ENCODE measurements at regions of chr1 and their contacts with region 1.

Region 1: DNA sequence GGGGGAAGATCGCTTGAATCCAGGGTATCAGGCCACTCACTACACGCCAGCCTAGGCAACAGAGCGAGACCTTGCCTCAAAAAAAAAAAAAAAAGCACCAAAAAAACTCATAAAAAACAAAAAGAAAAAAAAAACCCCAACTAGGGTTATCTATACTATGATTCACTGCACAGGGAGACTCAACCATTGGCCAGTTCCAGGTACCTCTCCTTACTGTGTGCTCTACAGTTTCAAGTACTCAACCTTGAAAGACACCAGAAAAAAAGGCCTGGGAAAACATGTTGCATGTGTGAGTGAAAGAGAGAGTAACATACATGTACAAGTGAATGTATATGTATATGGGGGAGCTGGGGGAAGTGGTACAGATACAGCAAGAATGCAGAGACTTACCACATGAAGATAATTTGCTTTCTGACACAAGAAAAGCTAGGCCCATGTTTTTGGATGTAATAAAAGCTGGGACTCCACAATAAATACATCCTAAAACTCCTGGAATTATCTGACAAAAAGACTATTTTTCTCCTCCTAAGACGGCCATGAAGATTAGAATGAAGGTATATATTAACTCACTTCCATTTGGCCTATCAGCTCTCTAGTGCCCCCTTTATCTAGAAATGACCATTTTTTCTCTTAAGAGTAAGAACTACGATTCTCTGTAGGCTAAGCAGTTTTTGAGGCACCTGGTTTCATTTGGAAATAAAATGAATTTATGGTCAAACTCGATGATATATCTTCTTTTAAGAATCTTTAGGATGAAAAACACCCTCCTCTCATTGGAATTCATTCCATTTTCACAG is 52.2 kb downstream of the SLC27A3 start:
- DNase-seq: no peak
- ATAC-seq: peak; percentile 64
- H3K4me3 ChIP-seq: no peak overlapping the region
- H3K27ac ChIP-seq: peak overlapping the region; percentile 52
- H3K4me1 ChIP-seq: peaks cover 10% of the 10 kb centered on the region
- H3K27me3 ChIP-seq: no peaks in the 10 kb centered on the region
- CTCF ChIP-seq: 0 out of 6 replicates have a peak, but pooled peaks of 1 of the 3 experiments have one; percentile 11
- EP300 ChIP-seq: no peak
- POLR2A ChIP-seq: no peak
- RAD21 ChIP-seq: no peak

Region 2: DNA sequence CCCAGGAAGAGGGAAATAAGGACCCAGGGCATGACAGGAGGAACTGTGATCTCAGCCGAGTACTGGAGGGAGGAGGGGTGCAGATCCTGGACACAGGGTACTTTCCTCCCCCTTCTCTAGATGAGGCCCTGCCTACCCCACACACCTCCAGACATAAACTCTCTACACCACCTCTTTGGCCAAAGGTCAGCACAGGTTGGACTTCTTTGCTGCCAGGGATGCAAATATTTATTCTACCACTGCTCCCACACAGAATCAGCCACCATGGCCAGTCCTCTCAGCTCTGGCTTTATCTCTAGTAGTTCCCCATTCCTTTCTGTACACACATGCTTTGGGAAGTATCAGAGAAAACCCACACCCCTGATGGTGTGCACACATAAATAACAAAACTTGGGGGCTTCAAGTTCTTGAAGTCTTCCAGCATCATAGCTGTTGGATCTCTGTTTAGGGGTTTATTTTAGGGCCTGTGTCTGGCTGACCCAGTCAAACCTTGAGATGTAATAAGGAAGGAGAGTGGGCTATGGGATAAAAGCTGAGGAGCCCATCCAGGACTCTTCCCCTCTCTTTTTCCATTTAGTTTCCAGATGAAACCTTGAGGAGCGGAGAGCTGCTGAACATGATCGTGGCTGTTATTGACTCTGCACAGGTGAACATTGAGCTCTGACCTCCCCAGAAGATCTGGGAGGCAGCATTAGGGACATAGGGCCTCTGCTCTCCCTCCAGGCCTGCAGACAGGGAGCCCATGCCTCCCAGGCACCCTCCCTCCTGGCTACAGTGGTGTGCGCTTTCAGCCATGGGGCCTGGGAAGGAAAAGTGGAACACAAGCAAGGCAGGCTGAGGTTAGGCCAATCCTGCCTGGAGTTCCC is 58.8 kb before region 1 on chr1:
- CTCF ChIA-PET with region 1: no interaction called
- POLR2A ChIA-PET with region 1: no interaction called
- RAD21 ChIA-PET with region 1: no interaction called
- SMC1A ChIA-PET with region 1: no interaction called
- in situ Hi-C with region 1: no loop called
- intact Hi-C with region 1: no loop called
- DNase-seq: no peak
- ATAC-seq: peak; percentile 32
- H3K4me3 ChIP-seq: no peak overlapping the region
- H3K27ac ChIP-seq: no peak overlapping the region
- H3K4me1 ChIP-seq: no peaks in the 10 kb centered on the region
- H3K27me3 ChIP-seq: no peaks in the 10 kb centered on the region
- CTCF ChIP-seq: no peak
- EP300 ChIP-seq: no peak
- POLR2A ChIP-seq: no peak
- RAD21 ChIP-seq: no peak

Region 3: GRCh38 chr1:153842006-153842471 is 14.7 kb after region 1 on chr1:
- CTCF ChIA-PET with region 1: interaction called, 15 read pairs
- POLR2A ChIA-PET with region 1: interaction called, 4 read pairs
- RAD21 ChIA-PET with region 1: no interaction called
- SMC1A ChIA-PET with region 1: interaction called, 4 read pairs
- in situ Hi-C with region 1: no loop called
- intact Hi-C with region 1: no loop called
- DNase-seq: peak; percentile 82
- ATAC-seq: peak; percentile 86
- H3K4me3 ChIP-seq: no peak overlapping the region
- H3K27ac ChIP-seq: peak overlapping the region; percentile 72
- H3K4me1 ChIP-seq: peaks cover 28% of the 10 kb centered on the region
- H3K27me3 ChIP-seq: no peaks in the 10 kb centered on the region
- CTCF ChIP-seq: no peak
- EP300 ChIP-seq: peak in 1 of 2 experiments; percentile 59; a peak in 1 of 4 replicates
- POLR2A ChIP-seq: no peak
- RAD21 ChIP-seq: no peak